Left ventricle myocardium superior (tissue), 1 donor: ENCODE measurements at regions of chr10 and their contacts with region 1.

Region 1: GRCh38 chr10:106625751-106626150 is 538.8 kb downstream of the SORCS1 start:
- DNase-seq: no peak
- ATAC-seq: no peak

Region 2: GRCh38 chr10:106682175-106682574 is 56.4 kb after region 1 on chr10:
- intact Hi-C with region 1: loop called (anchors 5 kb)
- DNase-seq: no peak
- ATAC-seq: peak; percentile 51